Activated B cell treated with CpG ODN at 0.5 μM for 24 hours (primary cell): ENCODE measurements at regions of chr16 and their contacts with region 1.

Region 1: DNA sequence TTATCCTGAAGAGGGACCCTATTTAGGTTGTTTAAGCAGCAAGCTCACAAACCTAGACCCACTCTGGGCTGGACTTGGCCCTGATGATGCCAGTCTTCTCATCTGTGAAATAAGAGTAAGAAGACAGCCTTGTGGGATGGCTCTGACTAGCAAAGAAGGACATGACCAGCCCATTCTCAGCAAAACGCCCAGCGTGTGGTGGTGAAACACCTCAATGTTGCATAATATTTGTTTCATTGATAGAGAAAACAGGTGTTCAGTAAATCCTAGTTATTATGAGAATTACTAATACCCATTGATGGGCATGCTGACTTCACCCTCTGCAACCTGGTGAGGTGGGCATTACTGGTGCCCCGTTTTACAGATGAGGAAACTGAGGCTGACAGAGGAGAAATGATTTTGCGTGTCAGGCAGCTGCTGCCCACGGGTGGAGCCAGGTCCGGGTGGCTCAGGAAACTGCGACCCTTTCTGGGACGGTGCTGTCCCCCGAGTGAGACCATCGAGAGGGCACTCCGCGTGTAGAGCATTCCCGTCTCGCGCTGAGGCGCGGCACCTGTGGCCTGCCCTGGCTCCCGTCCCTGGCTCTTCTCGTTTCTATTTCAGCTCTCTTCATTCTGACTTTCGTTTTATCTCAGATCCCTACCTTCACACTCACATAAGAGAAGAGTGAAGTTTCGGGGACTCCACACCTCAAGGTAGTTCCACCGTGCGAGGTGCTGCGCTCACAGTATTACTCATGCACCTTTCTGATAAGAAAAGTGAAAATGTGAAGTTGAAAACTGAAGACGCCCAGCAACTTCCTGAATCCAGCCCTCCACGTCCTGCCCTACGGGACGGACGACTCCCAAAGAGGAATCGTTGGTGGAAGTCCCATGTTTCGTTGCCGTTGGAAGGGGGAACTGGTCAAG is 48.5 kb downstream of the IRF8 start:
- DNase-seq: peak; percentile 51
- ATAC-seq: peak; percentile 79
- H3K4me3 Mint-ChIP-seq: peak overlapping the region; percentile 84
- H3K27ac Mint-ChIP-seq: peak overlapping the region; percentile 93
- H3K4me1 Mint-ChIP-seq: peaks cover 91% of the 10 kb centered on the region
- H3K27me3 Mint-ChIP-seq: no peaks in the 10 kb centered on the region
- CTCF ChIP-seq: no peak

Region 2: DNA sequence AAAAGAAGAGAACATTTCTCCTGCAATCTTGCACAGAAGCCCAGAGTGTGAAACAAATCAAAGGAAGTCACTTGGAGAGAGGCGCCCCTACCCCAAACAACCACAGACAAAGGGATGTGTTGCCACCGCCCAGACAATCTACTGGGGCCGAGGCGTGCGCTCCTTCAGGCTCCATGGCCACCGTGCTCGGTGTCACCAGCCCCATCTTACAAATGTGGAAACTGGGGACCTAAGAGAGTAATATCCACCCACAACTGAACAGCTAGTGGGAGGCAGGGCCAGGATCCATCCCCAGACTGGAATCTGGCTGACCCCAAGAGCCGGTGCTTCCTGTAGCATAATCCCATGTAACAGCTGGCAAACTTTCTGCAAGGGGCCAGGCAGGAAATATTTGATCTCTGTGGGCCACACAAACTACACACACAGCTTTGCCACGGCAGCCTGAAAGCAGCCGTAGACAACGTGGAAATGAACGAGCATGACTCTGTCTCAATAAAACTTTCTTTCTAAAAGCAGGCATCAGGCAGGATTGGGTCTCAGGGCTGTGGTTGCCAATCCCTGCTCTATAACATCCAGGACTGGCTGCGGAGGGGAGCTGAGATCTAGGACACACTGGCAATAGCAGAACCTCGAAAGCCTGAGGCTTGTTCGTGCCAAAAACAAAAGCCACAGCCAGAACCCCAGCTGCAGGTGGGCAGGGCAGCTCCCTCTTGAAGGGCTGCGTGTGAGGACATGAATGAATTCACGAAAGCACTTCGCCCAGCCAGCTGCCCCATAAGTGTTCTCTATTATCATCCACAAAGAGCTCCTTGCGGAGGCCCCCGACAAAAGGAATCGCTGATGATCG is 232.1 kb before region 1 on chr16:
- CTCF ChIA-PET with region 1: no interaction called
- POLR2A ChIA-PET with region 1: no interaction called
- intact Hi-C with region 1: no loop called
- DNase-seq: no peak
- ATAC-seq: no peak
- H3K4me3 Mint-ChIP-seq: no peak overlapping the region
- H3K27ac Mint-ChIP-seq: no peak overlapping the region
- H3K4me1 Mint-ChIP-seq: peaks cover 18% of the 10 kb centered on the region
- H3K27me3 Mint-ChIP-seq: no peaks in the 10 kb centered on the region
- CTCF ChIP-seq: no peak

Region 3: GRCh38 chr16:85829751-85830445 is 117.6 kb before region 1 on chr16:
- CTCF ChIA-PET with region 1: interaction called, 3 read pairs
- POLR2A ChIA-PET with region 1: no interaction called
- intact Hi-C with region 1: loop called (anchors 1 kb)
- DNase-seq: no peak
- ATAC-seq: no peak
- H3K4me3 Mint-ChIP-seq: peak overlapping the region; percentile 67
- H3K27ac Mint-ChIP-seq: peak overlapping the region; percentile 88
- H3K4me1 Mint-ChIP-seq: peaks cover 57% of the 10 kb centered on the region
- H3K27me3 Mint-ChIP-seq: no peaks in the 10 kb centered on the region
- CTCF ChIP-seq: no peak

Region 4: DNA sequence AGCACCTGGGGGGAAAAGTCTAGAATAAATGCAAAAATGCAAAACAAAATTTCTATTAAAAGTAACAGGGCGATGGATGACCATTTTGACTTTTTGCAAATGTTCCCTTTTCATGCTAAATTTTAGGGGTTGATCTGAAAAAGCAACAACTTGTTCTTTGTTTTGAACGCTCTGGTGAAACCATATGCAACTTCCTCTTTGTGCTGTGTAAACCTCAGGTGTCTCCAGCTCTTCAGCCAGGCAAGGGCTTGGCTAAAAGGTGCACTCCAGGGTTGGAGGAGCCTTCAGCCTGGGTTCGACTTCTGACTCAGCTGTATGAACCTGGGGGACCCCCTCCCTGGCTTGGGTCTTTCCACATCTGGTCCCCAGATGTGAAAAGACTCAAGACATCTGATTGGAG is 39.0 kb before region 1 on chr16:
- CTCF ChIA-PET with region 1: no interaction called
- POLR2A ChIA-PET with region 1: interaction called, 120 read pairs
- intact Hi-C with region 1: loop called (anchors 1 kb)
- DNase-seq: peak; percentile 20
- ATAC-seq: peak; percentile 60
- H3K4me3 Mint-ChIP-seq: peak overlapping the region; percentile 77
- H3K27ac Mint-ChIP-seq: peak overlapping the region; percentile 97
- H3K4me1 Mint-ChIP-seq: peaks cover 99% of the 10 kb centered on the region
- H3K27me3 Mint-ChIP-seq: no peaks in the 10 kb centered on the region
- CTCF ChIP-seq: no peak

Region 5: DNA sequence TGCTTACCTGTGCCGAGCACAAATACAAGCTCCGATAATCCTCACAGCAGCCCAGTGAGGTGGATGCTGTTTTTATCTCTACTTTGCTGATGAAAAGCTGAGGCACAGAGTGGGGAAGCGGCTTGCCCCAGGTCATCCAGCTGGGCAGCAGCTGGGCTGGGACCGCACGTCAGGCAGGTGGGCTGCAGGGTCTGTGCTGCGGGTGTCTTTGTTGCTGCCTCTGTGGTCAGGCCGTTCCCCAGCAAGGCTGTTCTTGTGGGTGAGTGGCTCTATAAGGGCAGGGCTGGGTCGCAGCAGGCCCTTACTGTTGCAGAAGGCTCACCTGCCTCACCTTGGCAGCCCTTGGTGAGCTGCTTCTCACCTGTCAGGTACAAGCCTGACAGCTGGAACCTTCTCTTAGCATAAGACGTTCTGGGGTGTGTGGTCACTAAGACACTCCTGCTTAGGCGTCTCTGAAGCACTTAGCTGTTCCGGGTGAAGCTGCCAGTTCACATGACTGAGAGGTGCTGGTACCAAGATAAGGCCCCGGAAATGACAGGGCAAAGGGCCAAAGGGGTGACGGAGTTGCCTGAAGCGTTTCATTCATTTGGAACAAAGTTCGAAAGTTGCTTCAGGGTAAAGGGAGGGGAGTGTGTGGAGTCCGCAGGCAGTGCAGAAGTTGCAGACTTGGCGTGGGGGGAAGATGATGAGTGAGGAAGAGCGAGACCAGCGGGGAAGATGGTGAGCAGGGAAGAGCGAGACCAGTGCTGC is 31.2 kb before region 1 on chr16:
- CTCF ChIA-PET with region 1: no interaction called
- POLR2A ChIA-PET with region 1: interaction called, 19 read pairs
- intact Hi-C with region 1: loop called (anchors 1 kb)
- DNase-seq: no peak
- ATAC-seq: no peak
- H3K4me3 Mint-ChIP-seq: peak overlapping the region; percentile 16
- H3K27ac Mint-ChIP-seq: peak overlapping the region; percentile 97
- H3K4me1 Mint-ChIP-seq: peaks cover 86% of the 10 kb centered on the region
- H3K27me3 Mint-ChIP-seq: no peaks in the 10 kb centered on the region
- CTCF ChIP-seq: no peak

Region 6: GRCh38 chr16:85928401-85928820 is 19.1 kb before region 1 on chr16:
- CTCF ChIA-PET with region 1: interaction called, 4 read pairs
- POLR2A ChIA-PET with region 1: interaction called, 111 read pairs
- intact Hi-C with region 1: loop called (anchors 2 kb)
- DNase-seq: no peak
- ATAC-seq: peak; percentile 29
- H3K4me3 Mint-ChIP-seq: peak overlapping the region; percentile 68
- H3K27ac Mint-ChIP-seq: peak overlapping the region; percentile 80
- H3K4me1 Mint-ChIP-seq: peaks cover 86% of the 10 kb centered on the region
- H3K27me3 Mint-ChIP-seq: no peaks in the 10 kb centered on the region
- CTCF ChIP-seq: no peak

Region 7: DNA sequence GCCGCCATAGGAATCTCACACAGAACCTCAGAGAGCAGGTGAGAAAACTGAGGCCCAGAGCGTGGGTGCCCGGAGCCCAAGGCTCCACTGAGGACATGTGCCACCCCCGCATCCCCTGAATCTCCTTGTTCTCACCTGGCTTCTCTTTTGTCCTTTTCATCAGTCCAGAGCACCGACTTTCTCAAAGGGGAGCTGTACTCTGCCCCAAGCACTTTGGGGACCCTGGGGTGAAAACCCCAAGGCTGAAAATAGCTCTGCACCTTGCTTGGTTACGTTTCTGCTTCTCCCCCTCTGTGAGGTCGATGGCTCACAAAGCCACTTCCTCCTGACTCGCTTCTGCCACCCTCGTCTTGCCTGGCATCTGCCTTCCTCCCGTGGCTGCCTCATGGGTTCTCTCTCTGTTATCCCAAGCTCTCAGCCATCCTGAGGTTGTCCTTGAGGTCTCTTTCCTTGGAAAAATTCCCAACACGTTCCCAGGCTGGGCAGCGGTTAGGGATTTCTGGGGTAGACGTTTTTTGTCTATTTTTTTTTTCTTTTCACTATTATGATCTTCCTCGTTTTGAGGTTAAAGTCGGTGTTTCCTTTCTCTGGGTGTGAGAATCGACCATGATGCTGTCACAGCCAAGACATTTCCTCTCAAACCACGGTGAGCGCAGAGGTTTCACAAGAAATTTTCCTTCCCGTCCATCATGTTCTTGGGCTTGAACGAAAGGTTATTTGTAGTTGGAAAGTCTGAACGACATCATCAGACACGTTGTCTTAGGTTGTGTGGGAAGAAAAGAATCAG is 11.3 kb before region 1 on chr16:
- CTCF ChIA-PET with region 1: interaction called, 8 read pairs
- POLR2A ChIA-PET with region 1: interaction called, 111 read pairs
- intact Hi-C with region 1: loop called (anchors 1 kb)
- DNase-seq: peak; percentile 66
- ATAC-seq: peak; percentile 78
- H3K4me3 Mint-ChIP-seq: peak overlapping the region; percentile 75
- H3K27ac Mint-ChIP-seq: peak overlapping the region; percentile 98
- H3K4me1 Mint-ChIP-seq: peaks cover 90% of the 10 kb centered on the region
- H3K27me3 Mint-ChIP-seq: no peaks in the 10 kb centered on the region
- CTCF ChIP-seq: no peak

Region 8: GRCh38 chr16:85963753-85964285 is 16.3 kb after region 1 on chr16:
- CTCF ChIA-PET with region 1: interaction called, 4 read pairs
- POLR2A ChIA-PET with region 1: interaction called, 9 read pairs
- intact Hi-C with region 1: loop called (anchors 1 kb)
- DNase-seq: no peak
- ATAC-seq: no peak
- H3K4me3 Mint-ChIP-seq: no peak overlapping the region
- H3K27ac Mint-ChIP-seq: peak overlapping the region; percentile 41
- H3K4me1 Mint-ChIP-seq: peaks cover 53% of the 10 kb centered on the region
- H3K27me3 Mint-ChIP-seq: no peaks in the 10 kb centered on the region
- CTCF ChIP-seq: no peak

Region 9: GRCh38 chr16:86029131-86029741 is 81.8 kb after region 1 on chr16:
- CTCF ChIA-PET with region 1: no interaction called
- POLR2A ChIA-PET with region 1: no interaction called
- intact Hi-C with region 1: no loop called
- DNase-seq: peak; percentile 12
- ATAC-seq: no peak
- H3K4me3 Mint-ChIP-seq: no peak overlapping the region
- H3K27ac Mint-ChIP-seq: no peak overlapping the region
- H3K4me1 Mint-ChIP-seq: no peaks in the 10 kb centered on the region
- H3K27me3 Mint-ChIP-seq: peaks cover 33% of the 10 kb centered on the region
- CTCF ChIP-seq: no peak

Region 10: GRCh38 chr16:86072328-86073102 is 125.0 kb after region 1 on chr16:
- CTCF ChIA-PET with region 1: no interaction called
- POLR2A ChIA-PET with region 1: no interaction called
- intact Hi-C with region 1: no loop called
- DNase-seq: no peak
- ATAC-seq: no peak
- H3K4me3 Mint-ChIP-seq: no peak overlapping the region
- H3K27ac Mint-ChIP-seq: no peak overlapping the region
- H3K4me1 Mint-ChIP-seq: no peaks in the 10 kb centered on the region
- H3K27me3 Mint-ChIP-seq: peaks cover 30% of the 10 kb centered on the region
- CTCF ChIP-seq: no peak